Naive thymus-derived CD4-positive, alpha-beta T cell (primary cell): ENCODE measurements at regions of chr21 and their contacts with region 1.

Region 1: GRCh38 chr21:43667191-43667904 is 8.0 kb downstream of the RRP1B start:
- DNase-seq: no peak
- ATAC-seq: no peak
- H3K4me3 ChIP-seq: no peak overlapping the region
- H3K4me3 Mint-ChIP-seq: peak overlapping the region in 6 of 10 donors; percentile 2 to 54 (median 28)
- H3K27ac ChIP-seq: no peak overlapping the region
- H3K27ac Mint-ChIP-seq: peak overlapping the region in 2 of 9 donors; percentile 30 to 59
- H3K4me1 ChIP-seq: peaks cover 0 to 4% of the 10 kb centered on the region in 2 donors
- H3K4me1 Mint-ChIP-seq: peaks cover 34 to 63% (median 46%) of the 10 kb centered on the region in 7 donors
- H3K27me3 ChIP-seq: no peaks in the 10 kb centered on the region
- H3K27me3 Mint-ChIP-seq: no peaks in the 10 kb centered on the region

Region 2: DNA sequence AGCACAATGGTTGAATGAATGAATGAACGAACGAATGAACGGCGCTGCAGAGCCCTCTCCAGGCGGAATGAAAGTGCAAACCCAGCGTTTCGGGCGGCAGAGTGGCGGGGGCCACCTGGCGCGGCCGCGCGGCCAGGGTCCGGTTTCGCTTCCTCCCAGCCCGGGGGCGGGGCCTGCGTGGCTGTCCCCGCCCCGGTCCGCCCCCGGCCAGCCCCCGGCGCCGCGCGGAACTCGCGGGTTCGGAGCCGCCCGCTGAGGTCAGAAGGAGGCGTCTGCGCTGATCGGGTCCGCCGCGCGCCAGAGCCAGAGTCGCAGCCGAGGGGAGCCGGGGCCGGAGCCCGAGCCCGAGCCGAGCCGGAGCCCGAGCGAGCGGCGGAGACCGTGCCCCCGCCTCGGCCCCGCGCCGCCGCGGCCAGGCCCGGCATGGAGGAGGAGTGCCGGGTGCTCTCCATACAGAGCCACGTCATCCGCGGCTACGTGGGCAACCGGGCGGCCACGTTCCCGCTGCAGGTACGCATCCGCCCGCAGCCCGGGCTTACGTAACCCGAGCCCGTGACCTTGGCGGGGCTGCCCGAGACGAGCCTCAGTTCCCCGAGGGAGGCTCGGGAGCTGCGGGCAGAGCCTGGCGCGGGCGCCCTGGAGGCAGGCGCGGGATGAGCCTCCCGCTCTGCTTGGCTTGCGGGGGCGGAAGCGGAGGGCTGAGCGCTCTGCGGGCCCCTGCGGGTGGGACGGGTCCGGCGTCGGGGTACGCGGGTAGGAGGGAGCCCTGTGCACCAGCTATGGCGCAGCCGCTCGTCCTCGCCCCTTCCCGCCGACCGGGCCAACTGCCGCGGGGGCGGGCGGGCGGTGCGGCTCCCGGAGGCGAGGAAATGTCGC is 51.8 kb after region 1 on chr21 and contains the start of gene PDXK:
- CTCF ChIA-PET with region 1: no interaction called
- POLR2A ChIA-PET with region 1: no interaction called
- intact Hi-C with region 1: loop called in 1 of 2 experiments (anchors 10 kb)
- DNase-seq: peak; percentile 73 to 90 (median 77)
- ATAC-seq: peak; percentile 92
- H3K4me3 ChIP-seq: peak within 1 kb of the TSS; percentile 90
- H3K4me3 Mint-ChIP-seq: peak within 1 kb of the TSS; percentile 77 to 93 (median 87)
- H3K27ac ChIP-seq: peak within 1 kb of the TSS; percentile 86
- H3K27ac Mint-ChIP-seq: peak within 1 kb of the TSS; percentile 43 to 86 (median 72)
- H3K4me1 ChIP-seq: peaks cover 12 to 19% of the 10 kb centered on the region in 2 donors
- H3K4me1 Mint-ChIP-seq: peaks cover 20 to 31% (median 26%) of the 10 kb centered on the region in 7 donors
- H3K27me3 ChIP-seq: no peaks in the 10 kb centered on the region
- H3K27me3 Mint-ChIP-seq: peaks cover 0 to 19% (median 0%) of the 10 kb centered on the region in 5 donors
- total RNA-seq, gene PDXK: 71.1 to 103 (median 97.0) TPM

Region 3: DNA sequence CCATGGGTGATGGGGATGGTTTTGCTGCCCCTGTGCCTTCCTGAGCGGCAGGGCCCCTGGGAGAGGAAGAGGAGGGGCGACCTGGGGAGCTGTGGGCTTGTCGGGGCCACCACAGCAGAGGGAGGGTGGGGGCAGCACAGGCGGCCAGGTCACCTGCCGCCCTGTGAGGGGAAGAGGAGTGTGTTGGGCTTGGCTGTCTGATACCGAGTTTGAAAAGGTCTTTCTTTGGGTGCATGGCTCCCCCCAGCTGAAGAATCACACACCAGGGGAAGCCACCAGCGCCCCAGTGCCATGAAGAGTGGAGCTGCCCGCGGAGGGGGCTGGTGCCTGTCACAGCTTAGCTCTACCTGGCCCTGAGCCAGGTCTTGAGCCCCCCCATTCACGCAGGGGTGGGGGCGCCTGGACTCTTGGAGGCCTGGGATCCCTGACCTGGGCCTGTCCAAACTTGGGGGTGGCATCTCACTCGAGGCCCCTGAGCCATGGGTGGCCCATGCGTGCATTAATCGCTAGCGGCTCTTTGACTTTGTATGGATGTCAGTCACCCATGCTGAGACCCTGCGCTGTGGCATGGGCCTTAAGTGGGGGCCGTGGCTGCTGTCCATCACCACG is 82.4 kb after region 1 on chr21:
- CTCF ChIA-PET with region 1: no interaction called
- POLR2A ChIA-PET with region 1: no interaction called
- intact Hi-C with region 1: no loop called
- DNase-seq: no peak
- ATAC-seq: no peak
- H3K4me3 ChIP-seq: no peak overlapping the region
- H3K4me3 Mint-ChIP-seq: no peak overlapping the region
- H3K27ac ChIP-seq: no peak overlapping the region
- H3K27ac Mint-ChIP-seq: peak overlapping the region in 1 of 9 donors; percentile 32
- H3K4me1 ChIP-seq: no peaks in the 10 kb centered on the region
- H3K4me1 Mint-ChIP-seq: no peaks in the 10 kb centered on the region
- H3K27me3 ChIP-seq: no peaks in the 10 kb centered on the region
- H3K27me3 Mint-ChIP-seq: no peaks in the 10 kb centered on the region

Region 4: GRCh38 chr21:43775795-43776430 is 108.6 kb after region 1 on chr21 and contains the start of gene CSTB:
- CTCF ChIA-PET with region 1: no interaction called
- POLR2A ChIA-PET with region 1: no interaction called
- intact Hi-C with region 1: loop called in 1 of 2 experiments (anchors 10 kb)
- DNase-seq: peak; percentile 62 to 91 (median 78)
- ATAC-seq: peak; percentile 85
- H3K4me3 ChIP-seq: peak within 1 kb of the TSS; percentile 64
- H3K4me3 Mint-ChIP-seq: peak within 1 kb of the TSS; percentile 89 to 96 (median 94)
- H3K27ac ChIP-seq: peak within 1 kb of the TSS; percentile 77
- H3K27ac Mint-ChIP-seq: peak within 1 kb of the TSS; percentile 80 to 91 (median 84)
- H3K4me1 ChIP-seq: peaks cover 11 to 18% of the 10 kb centered on the region in 2 donors
- H3K4me1 Mint-ChIP-seq: peaks cover 29 to 59% (median 41%) of the 10 kb centered on the region in 7 donors
- H3K27me3 ChIP-seq: no peaks in the 10 kb centered on the region
- H3K27me3 Mint-ChIP-seq: no peaks in the 10 kb centered on the region
- total RNA-seq, gene CSTB: 14.7 to 66.5 (median 36.6) TPM